Right ventricle myocardium inferior (tissue), 1 donor: ENCODE measurements at regions of chr22 and their contacts with region 1.

Region 1: GRCh38 chr22:38239101-38239761 is 33.6 kb downstream of the TMEM184B start:
- DNase-seq: no peak
- ATAC-seq: peak; percentile 61

Region 2: GRCh38 chr22:38201710-38202436 is 37.4 kb before region 1 on chr22 and contains the start of gene MAFF:
- intact Hi-C with region 1: loop called (anchors 5 kb)
- DNase-seq: peak; percentile 98
- ATAC-seq: peak; percentile 85
- total RNA-seq, gene MAFF: 4.7 TPM